Activated T-helper 1 cell treated with anti-CD3 and anti-CD28 coated beads, Interleukin-12 subunit alpha, Interleukin-12 subunit beta, Interleukin-2, Interleukin-4 antibody, amounts not matched to agents 30 ng/mL and 10 ng/mL and 1 ng/mL, durations not matched to agents 14 hours and 24 hours and 36 hours (primary cell): ENCODE measurements at regions of chr4 and their contacts with region 1.

Region 1: DNA sequence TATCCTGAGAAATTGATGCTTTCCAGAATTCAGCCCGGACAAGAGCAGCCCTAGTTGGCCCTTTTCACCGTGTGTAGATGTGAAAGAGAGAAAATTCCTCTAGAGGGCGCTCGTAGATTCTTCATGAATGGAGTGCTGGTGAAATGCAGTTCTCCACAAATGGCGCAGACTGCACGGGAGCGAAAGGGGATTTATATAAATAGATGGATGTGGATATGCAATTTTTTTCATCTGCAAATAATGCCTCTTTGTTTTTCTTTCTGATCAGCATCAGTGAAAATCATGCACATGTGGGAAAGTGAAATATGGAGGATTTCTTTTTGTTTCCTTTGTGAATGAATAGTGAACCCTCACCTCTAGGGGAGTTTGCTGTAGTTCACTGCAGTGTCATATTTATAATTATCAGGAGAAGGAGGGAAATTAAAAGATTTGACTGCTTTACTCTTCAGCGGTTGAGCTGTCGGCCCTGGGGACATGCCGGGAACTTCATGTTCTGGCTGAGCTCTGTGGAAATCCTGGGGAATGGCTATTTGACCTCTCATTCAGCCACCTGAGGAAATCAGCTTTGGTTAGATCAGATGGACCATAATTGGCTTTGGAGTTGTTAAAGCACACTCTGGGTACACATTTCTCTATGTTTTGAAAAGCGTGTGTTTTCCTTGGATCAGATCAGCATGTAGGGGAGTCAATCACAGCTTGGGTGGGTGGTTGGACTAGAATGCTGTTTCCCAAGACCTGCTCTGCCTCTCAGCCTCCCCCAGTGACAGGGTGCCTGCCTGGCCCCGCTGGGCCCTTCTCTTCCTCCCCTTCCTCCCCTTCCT is 115.0 kb upstream of the SHISA3 start:
- DNase-seq: peak; percentile 8
- H3K4me3 Mint-ChIP-seq: no peak overlapping the region
- H3K27ac Mint-ChIP-seq: no peak overlapping the region
- H3K4me1 Mint-ChIP-seq: peaks cover 14% of the 10 kb centered on the region
- H3K27me3 Mint-ChIP-seq: no peaks in the 10 kb centered on the region

Region 2: DNA sequence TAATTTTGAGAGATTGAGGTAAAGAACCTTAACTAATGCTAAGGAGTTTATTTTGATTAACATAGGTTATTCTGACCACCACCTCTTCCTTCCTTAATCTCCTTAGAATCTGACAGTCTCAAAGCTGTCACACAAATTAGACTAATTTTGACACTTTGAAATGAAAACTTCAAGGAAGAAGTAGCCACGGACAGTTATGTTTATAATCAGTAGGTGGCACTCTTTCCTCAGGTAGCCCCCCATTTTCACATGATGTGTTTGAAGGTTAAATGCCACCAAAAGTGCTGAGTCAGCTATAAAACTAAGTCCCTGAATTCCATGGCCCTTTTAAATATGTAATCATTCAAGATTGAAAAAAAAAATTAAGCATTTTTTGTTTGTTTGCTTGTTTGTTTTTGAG is 324.7 kb before region 1 on chr4:
- intact Hi-C with region 1: loop called (anchors 5 kb)
- DNase-seq: no peak
- H3K4me3 Mint-ChIP-seq: no peak overlapping the region
- H3K27ac Mint-ChIP-seq: no peak overlapping the region
- H3K4me1 Mint-ChIP-seq: no peaks in the 10 kb centered on the region
- H3K27me3 Mint-ChIP-seq: no peaks in the 10 kb centered on the region

Region 3: DNA sequence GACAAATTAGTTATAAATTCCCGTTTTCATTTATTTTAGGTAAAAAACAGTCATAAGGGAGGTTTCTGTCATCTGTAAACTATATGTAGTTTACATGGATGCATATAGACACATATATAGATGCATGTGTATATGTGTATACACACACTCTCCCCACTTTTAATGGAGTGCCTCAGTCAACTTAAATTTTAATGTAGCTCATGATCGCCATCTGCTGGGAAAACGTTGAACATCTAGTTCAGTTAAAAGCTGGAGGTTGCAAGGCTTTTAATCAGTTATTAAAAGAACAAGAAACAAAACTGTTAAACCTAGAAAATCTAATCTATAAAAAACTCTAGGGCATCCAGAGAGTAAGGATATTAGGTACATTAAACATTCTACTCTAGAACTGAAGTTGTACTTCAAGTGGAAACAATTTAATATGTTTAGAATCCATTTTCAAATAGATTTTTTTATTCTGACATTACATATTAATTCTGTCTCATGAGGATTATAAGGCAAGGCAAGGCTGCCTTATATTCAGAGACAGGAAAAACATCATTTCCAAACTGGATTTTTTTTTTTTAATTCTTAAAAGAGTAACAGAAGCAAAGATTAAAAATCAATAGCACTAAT is 237.6 kb after region 1 on chr4:
- intact Hi-C with region 1: loop called (anchors 1 kb)
- DNase-seq: peak; percentile 21
- H3K4me3 Mint-ChIP-seq: no peak overlapping the region
- H3K27ac Mint-ChIP-seq: no peak overlapping the region
- H3K4me1 Mint-ChIP-seq: no peaks in the 10 kb centered on the region
- H3K27me3 Mint-ChIP-seq: no peaks in the 10 kb centered on the region

Region 4: DNA sequence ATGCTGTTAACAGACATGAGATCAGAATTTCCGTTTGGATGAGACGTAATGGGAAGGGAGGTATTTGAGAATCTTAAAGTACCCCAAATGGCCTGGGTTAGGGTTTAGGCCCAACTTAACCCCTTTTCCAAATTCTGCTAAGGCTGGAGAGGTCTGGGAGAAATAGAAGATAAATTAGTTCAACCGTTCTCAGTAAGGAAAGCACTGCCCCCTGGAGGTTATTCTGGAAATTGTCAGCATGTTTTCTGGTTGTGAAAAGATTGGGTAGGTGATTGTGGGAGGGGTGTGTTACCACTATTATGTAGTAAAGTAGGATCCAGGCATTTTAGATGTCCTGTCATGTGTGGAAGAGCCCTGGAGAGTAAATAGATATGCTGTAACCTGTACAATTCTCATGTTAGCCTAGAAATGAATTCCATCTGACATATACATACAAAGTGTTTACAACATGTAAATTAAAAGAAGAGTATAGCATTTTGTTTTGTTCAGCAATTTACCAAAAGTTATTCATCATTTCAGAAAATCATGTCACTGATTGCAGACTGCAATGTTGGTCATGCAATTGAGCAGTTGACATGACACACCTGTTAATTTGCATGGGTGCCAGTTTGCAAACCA is 583.4 kb after region 1 on chr4:
- intact Hi-C with region 1: loop called (anchors 1 kb)
- DNase-seq: peak; percentile 27
- H3K4me3 Mint-ChIP-seq: no peak overlapping the region
- H3K27ac Mint-ChIP-seq: no peak overlapping the region
- H3K4me1 Mint-ChIP-seq: no peaks in the 10 kb centered on the region
- H3K27me3 Mint-ChIP-seq: no peaks in the 10 kb centered on the region